AG04449 (cell line): ENCODE measurements at regions of chr3 and their contacts with region 1.

Region 1: GRCh38 chr3:56801662-56802377 is at the start of gene ARHGEF3:
- DNase-seq: no peak
- H3K4me3 ChIP-seq: peak within 1 kb of the TSS; percentile 68
- CTCF ChIP-seq: peak; percentile 25

Region 2: GRCh38 chr3:56443372-56443771 is 358.4 kb before region 1 on chr3:
- CTCF ChIA-PET with region 1: no interaction called
- POLR2A ChIA-PET with region 1: no interaction called
- DNase-seq: no peak
- H3K4me3 ChIP-seq: no peak overlapping the region
- CTCF ChIP-seq: no peak

Region 3: DNA sequence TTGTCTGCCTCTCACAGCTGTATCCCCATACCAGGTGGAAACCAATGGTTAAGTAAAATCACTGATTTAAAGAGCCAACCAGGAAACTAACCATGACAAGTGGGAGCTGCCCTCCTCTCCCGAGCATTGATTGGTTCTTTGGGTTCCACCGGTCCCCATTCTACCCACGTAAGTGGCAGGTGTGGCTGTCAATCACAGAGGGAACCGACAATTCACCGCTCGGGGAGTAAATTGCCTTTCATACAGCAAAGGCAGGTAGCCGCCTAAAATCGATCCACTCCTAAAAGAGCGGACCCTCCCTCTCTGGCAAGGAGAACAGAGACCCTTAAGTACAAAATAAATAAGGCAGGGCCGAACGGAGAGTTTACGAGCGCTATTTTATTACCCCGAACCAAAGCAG is 334.7 kb before region 1 on chr3:
- CTCF ChIA-PET with region 1: no interaction called
- POLR2A ChIA-PET with region 1: no interaction called
- DNase-seq: no peak
- H3K4me3 ChIP-seq: no peak overlapping the region
- CTCF ChIP-seq: no peak

Region 4: DNA sequence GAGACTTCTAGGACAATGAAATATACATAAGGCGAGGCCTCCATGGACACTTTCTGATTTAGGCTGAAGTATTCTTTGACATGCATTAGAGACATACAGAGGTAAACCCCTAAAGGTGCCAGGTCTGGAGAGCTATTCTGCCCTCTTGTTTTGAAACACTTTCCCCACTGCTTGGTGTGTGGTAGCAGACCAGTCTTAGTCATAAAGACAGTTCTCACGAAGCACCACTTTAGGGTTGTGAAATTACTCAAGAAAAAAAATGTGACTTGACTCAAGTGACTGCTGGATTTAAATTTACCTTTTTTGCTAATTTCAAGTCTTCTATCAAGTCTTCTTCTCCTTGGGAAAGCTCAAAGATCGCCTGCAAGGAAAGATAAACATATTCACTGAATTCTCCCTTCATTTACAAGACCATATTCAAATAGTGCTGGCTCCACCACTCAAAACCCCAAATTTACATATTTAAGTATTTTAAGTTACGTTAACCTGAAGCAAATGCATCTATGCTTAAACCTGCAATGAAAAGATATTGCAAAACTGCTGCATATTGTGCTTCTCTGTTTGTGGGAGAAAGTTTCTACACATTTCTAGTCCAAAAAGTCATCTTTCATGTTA is 48.5 kb before region 1 on chr3:
- CTCF ChIA-PET with region 1: interaction called, 17 read pairs
- POLR2A ChIA-PET with region 1: no interaction called
- DNase-seq: no peak
- H3K4me3 ChIP-seq: no peak overlapping the region
- CTCF ChIP-seq: no peak

Region 5: DNA sequence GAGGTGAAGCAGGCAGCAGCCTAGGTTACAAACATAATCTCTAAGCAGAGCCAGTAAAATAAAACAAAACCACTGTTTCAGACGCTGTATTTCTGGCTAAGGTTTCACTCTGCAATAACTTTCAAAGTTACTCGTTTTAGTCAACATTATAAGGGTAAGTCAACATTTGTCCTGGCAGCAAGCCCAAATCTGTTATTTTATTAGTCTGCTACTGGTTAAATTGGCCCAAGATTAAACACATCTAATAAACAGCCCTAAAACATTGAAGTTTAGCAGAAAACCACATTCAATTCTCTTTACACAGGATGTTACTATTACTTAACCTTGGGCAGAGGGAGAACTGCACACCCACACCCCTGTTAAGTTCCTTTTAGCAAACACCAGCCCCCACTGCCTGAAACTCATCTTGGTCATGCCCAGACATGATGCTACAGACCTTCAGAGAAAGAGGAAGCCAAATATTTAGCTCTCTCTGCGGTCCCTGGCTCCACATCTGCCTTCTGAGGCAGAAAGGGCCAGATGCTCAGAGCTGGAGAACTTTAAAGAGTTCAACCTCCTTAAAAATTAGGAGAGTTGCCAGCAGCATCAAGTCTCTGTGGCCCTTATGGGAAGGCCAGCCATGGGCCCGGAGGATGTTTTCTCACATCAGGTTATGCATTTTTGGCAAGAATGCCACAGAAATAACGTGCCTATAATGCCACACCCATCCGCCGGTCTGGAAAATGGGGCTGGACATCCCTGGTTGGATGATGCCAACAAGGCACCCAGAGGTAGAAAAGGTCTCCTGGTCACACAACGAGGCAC is 18.0 kb before region 1 on chr3:
- CTCF ChIA-PET with region 1: interaction called, 87 read pairs
- POLR2A ChIA-PET with region 1: no interaction called
- DNase-seq: peak; percentile 28
- H3K4me3 ChIP-seq: no peak overlapping the region
- CTCF ChIP-seq: no peak

Region 6: GRCh38 chr3:56819016-56819809 is 17.4 kb after region 1 on chr3:
- CTCF ChIA-PET with region 1: interaction called, 44 read pairs
- POLR2A ChIA-PET with region 1: no interaction called
- DNase-seq: no peak
- H3K4me3 ChIP-seq: no peak overlapping the region
- CTCF ChIP-seq: no peak

Region 7: DNA sequence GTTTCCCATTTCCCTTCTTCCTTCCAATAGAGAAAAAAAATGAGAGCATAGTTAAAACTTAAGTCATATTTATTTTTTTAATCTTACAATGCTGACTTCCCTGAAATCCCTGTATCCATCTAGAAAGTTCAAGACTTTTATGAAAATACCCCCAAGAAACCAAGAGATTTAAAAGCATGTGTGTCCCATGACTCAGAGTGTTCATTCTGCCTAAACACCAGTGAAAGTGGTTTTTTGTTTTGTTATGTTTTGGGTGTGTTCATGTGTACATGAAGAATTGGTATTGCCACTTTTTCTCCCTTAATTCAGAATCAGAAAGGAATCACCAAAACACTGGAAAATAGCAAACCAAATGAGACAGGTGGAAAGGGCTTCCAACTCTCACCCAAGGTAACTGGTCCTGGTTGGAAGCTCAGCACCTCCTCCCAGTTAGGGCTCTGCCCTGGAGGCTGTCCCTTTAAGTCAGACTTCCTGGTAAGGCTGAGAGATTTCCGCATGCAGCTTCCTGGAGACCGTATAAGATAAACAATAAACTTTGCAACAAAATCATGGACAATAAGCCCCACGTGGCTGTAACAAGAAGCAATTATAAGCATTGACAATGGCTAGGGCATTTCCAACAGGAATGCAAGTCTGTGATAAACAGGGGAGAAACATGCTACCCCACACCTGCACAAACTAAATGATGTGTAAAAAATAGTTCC is 121.9 kb after region 1 on chr3:
- CTCF ChIA-PET with region 1: no interaction called
- POLR2A ChIA-PET with region 1: no interaction called
- DNase-seq: no peak
- H3K4me3 ChIP-seq: no peak overlapping the region
- CTCF ChIP-seq: no peak

Region 8: GRCh38 chr3:56980798-56981390 is 179.1 kb after region 1 on chr3:
- CTCF ChIA-PET with region 1: interaction called, 131 read pairs
- POLR2A ChIA-PET with region 1: no interaction called
- DNase-seq: peak; percentile 88
- H3K4me3 ChIP-seq: no peak overlapping the region
- CTCF ChIP-seq: no peak

Region 9: DNA sequence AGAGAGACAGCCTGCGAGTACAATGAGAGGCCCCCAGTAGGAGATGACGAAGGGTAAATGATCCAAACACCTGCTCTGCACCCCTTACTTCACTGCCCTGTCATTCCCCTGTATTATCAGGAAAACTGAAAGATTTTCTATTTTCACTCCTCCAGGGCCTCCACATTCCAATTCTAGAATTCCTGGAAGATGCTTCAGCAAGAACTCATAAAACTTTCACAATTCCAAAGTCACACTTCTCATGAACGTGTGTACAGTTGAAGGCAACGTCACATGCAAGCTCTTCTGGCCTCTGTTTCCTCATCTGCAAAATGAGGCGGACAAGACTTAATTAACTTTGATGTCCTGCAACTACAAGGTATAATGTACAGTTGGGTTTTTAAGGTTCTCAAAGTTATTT is 195.9 kb after region 1 on chr3:
- CTCF ChIA-PET with region 1: interaction called, 31 read pairs
- POLR2A ChIA-PET with region 1: no interaction called
- DNase-seq: no peak
- H3K4me3 ChIP-seq: no peak overlapping the region
- CTCF ChIP-seq: no peak